ENCODE measurements at regions of chr1 and their contacts with region 1.

Region 1: DNA sequence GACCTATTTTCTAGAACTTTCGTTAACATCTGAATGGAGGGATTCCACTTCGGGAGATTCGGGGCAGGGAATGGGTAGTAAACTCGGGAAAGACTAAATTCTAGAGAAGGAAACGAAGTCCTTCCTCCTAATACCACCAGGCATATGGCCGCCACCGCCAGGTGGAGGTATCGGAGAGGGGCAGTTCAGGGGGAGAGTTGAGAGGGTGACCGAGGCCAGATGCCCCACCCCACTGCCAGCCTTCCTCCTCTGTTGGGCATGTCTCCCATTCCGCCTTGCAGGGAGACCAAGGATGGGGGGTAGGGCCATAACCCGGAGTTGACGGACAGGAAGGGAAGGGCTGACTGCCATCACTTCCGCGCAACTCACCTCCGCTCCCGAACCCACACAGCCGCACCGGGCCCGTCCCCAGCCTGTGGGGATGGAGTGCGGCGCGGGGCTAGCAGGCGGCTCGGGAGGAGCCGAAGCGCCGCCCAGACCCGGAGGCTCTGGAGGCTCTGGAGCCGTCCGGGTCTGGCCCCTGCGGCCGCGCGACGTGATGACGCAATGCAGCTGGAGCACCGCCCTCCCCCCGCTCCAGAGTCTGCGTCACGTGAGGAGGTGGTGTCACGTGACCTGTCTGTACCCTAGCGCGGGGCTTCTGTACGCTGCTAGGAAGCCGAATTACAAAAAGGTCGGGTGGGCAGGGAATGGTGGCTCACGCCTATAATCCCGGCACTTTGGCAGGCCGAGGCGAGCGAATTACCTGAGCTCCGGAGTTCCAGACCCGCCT is at the start of gene KLHL12:
- DNase-seq: peak; percentile 97 to 98 (median 97)
- ATAC-seq: peak; percentile 98 to 100 (median 99)
- H3K4me3 ChIP-seq: peak within 1 kb of the TSS; percentile 69 to 96 (median 84)
- H3K27ac ChIP-seq: peak within 1 kb of the TSS; percentile 57 to 98 (median 94)
- H3K4me1 ChIP-seq: peaks cover 0 to 40% (median 11%) of the 10 kb centered on the region in 12 donors
- H3K27me3 ChIP-seq: no peaks in the 10 kb centered on the region
- CTCF ChIP-seq: peak; percentile 23 to 69 (median 54)
- POLR2A ChIP-seq: peak; percentile 39 to 93
- total RNA-seq, gene KLHL12: 16.1 to 30.1 (median 21.5) TPM

Region 2: GRCh38 chr1:202888531-202889360 is 38.2 kb before region 1 on chr1 and contains the start of gene RABIF:
- intact Hi-C with region 1: loop called in 1 of 10 experiments (anchors 2 kb)
- DNase-seq: peak; percentile 95 to 98 (median 97)
- ATAC-seq: peak; percentile 96 to 99 (median 98)
- H3K4me3 ChIP-seq: peak within 1 kb of the TSS; percentile 72 to 91 (median 80)
- H3K27ac ChIP-seq: peak within 1 kb of the TSS; percentile 75 to 98 (median 94)
- H3K4me1 ChIP-seq: peaks cover 0 to 22% (median 8%) of the 10 kb centered on the region in 12 donors
- H3K27me3 ChIP-seq: no peaks in the 10 kb centered on the region
- CTCF ChIP-seq: peak in 6 of 12 donors; percentile 9 to 53 (median 30)
- POLR2A ChIP-seq: peak in 1 of 2 donors; percentile 92
- total RNA-seq, gene RABIF: 3.6 to 9.2 (median 5.3) TPM

Region 3: GRCh38 chr1:202957733-202958543 is 31.0 kb after region 1 on chr1 and contains the start of gene ADIPOR1:
- intact Hi-C with region 1: loop called in 1 of 10 experiments (anchors 1 kb)
- DNase-seq: peak; percentile 92 to 96 (median 94)
- ATAC-seq: peak; percentile 97 to 99 (median 98)
- H3K4me3 ChIP-seq: peak within 1 kb of the TSS; percentile 92 to 100 (median 98)
- H3K27ac ChIP-seq: peak within 1 kb of the TSS; percentile 65 to 99 (median 96)
- H3K4me1 ChIP-seq: peaks cover 2 to 64% (median 45%) of the 10 kb centered on the region in 12 donors
- H3K27me3 ChIP-seq: no peaks in the 10 kb centered on the region
- CTCF ChIP-seq: peak in 6 of 12 donors; percentile 10 to 44 (median 35)
- POLR2A ChIP-seq: peak; percentile 92 to 95
- total RNA-seq, gene ADIPOR1: 91.4 to 155 (median 102) TPM

Region 4: DNA sequence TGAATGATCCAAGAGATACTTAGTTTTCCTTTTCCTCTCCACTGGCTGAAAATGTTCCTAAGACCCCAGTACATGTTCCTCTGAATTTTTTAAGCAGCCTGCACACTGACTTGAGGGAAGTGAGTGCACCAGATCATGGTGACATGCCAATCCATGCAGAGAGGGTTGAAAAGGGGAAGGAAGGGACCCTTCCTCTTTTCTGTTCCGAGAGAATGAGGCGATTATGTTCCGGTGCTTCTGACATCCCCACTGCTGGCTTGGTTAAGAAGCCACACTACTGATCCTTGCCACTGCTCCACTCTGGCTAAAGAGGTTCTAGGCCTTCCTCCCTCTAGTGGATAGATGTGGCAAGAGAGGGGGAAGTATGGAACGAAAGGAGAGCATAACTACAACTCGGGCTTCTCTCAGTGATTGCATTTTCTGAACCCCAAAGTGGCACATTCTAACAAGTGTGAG is 42.0 kb after region 1 on chr1:
- intact Hi-C with region 1: loop called in 3 of 10 experiments (anchors 1 to 5 kb)
- DNase-seq: peak in 4 of 5 donors; percentile 37 to 66 (median 55)
- ATAC-seq: peak in 3 of 4 donors; percentile 32 to 58 (median 36)
- H3K4me3 ChIP-seq: peak overlapping the region in 1 of 12 donors; percentile 71
- H3K27ac ChIP-seq: peak overlapping the region in 6 of 12 donors; percentile 26 to 99 (median 92)
- H3K4me1 ChIP-seq: peaks cover 0 to 41% (median 29%) of the 10 kb centered on the region in 12 donors
- H3K27me3 ChIP-seq: no peaks in the 10 kb centered on the region
- CTCF ChIP-seq: peak; percentile 27 to 76 (median 52)
- POLR2A ChIP-seq: no peak

Region 5: DNA sequence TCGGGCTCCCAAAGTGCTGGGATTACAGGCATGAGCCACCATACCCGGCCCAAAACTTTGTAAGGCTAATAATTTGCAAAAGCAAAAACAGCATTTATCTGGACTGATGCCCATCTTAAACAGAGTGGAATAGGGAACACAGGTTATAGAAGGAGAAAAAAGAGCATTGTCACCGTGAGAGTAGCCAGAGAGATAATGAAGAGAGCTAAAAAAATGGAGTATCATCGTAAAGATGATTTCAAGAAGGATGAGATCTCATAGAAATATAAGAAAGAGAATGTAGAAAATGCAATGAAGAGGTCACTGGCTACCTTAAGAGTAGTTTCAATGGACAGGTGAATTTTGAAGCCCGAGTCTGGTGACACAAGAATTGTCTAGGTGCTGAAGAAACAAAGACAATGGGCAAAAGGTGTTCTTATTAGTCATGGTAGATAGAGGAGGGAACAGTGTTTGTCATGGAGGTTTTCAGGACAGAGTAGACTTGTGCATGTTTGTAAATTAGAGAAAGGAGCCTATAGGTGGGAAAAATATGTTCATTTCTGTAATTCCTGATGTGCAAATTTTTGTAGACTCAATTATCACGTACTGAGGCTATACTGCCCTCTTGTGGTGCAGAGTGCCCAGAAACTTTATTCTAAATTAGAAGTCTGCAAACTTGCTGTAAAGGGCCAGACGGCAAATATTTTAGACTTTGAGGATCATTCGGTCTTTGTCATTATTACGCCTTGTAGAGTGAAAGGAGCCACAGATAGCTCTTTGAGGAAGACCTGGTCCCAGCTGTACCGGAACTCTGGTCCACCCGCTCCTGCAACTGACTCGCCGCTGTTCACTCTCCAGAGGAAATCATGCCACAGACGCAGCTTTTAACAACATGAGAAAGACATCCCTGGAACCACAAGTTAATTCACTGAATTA is 72.2 kb after region 1 on chr1:
- intact Hi-C with region 1: loop called in 9 of 10 experiments (anchors 2 to 5 kb)
- DNase-seq: peak in 3 of 5 donors; percentile 29 to 39 (median 33)
- ATAC-seq: peak in 3 of 4 donors; percentile 32 to 46 (median 33)
- H3K4me3 ChIP-seq: peak overlapping the region in 1 of 12 donors; percentile 13
- H3K27ac ChIP-seq: no peak overlapping the region
- H3K4me1 ChIP-seq: peaks cover 0 to 13% (median 0%) of the 10 kb centered on the region in 12 donors
- H3K27me3 ChIP-seq: peaks cover 0 to 25% (median 5%) of the 10 kb centered on the region in 9 donors
- CTCF ChIP-seq: peak; percentile 72 to 88 (median 79)
- POLR2A ChIP-seq: no peak

Region 6: GRCh38 chr1:203006948-203007871 is 80.3 kb after region 1 on chr1 and contains the start of gene TMEM183A:
- intact Hi-C with region 1: loop called in 3 of 10 experiments (anchors 2 to 5 kb)
- DNase-seq: peak; percentile 97 to 98 (median 97)
- ATAC-seq: peak; percentile 98 to 99 (median 98)
- H3K4me3 ChIP-seq: peak within 1 kb of the TSS; percentile 63 to 97 (median 84)
- H3K27ac ChIP-seq: peak within 1 kb of the TSS; percentile 52 to 94 (median 91)
- H3K4me1 ChIP-seq: peaks cover 0 to 32% (median 15%) of the 10 kb centered on the region in 12 donors
- H3K27me3 ChIP-seq: no peaks in the 10 kb centered on the region
- CTCF ChIP-seq: no peak
- POLR2A ChIP-seq: peak; percentile 80 to 96
- total RNA-seq, gene TMEM183A: 20.0 to 34.8 (median 29.9) TPM

Region 7: DNA sequence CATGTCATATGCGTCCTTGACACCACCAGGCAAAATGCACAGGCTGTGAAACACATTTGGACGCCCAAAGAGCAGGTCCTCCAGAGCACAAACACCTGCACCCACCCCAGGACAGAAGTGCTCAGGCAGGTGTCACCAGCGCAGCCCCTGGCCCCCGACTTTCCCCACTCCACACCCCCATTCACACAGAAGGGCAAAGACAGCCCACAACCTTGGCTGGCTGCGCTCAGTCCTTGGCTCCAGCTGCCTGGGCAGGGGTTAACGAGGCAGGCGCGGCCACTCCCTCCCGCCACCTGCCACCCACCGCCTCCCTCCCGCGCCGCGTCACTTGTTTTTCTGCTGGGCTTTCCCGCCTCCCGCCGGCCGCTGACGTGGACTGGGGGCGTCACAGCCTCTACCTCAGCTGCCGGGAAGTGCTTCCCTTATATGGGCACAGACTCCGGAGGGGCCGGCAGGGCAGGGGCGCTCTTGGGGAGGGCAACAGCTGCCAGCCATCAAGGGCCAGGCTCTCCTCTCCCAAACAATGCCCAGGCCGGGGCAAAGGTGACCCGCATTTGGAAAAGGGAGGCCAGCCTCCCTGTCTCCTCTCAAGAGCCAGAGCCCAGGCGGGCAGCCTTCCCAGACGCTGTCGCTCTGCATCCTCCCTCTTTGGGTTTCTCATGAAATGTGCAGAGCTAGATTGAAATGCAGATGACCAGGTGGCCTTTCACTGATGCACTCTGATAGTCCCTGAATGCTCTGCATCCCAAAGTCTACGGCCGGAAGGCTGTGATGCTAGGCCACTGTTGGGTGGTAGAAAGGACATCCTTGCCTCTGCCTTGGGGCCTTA is 363.6 kb after region 1 on chr1:
- intact Hi-C with region 1: no loop called
- DNase-seq: peak; percentile 96 to 97 (median 97)
- ATAC-seq: peak; percentile 83 to 92 (median 88)
- H3K4me3 ChIP-seq: peak overlapping the region in 10 of 12 donors; percentile 14 to 48 (median 34)
- H3K27ac ChIP-seq: peak overlapping the region; percentile 87 to 98 (median 91)
- H3K4me1 ChIP-seq: peaks cover 29 to 64% (median 55%) of the 10 kb centered on the region in 12 donors
- H3K27me3 ChIP-seq: no peaks in the 10 kb centered on the region
- CTCF ChIP-seq: no peak
- POLR2A ChIP-seq: peak; percentile 26 to 76

Measured in heart left ventricle (tissue), 16 donors.